ENCODE measurements at regions of chr17 and their contacts with region 1.

Region 1: DNA sequence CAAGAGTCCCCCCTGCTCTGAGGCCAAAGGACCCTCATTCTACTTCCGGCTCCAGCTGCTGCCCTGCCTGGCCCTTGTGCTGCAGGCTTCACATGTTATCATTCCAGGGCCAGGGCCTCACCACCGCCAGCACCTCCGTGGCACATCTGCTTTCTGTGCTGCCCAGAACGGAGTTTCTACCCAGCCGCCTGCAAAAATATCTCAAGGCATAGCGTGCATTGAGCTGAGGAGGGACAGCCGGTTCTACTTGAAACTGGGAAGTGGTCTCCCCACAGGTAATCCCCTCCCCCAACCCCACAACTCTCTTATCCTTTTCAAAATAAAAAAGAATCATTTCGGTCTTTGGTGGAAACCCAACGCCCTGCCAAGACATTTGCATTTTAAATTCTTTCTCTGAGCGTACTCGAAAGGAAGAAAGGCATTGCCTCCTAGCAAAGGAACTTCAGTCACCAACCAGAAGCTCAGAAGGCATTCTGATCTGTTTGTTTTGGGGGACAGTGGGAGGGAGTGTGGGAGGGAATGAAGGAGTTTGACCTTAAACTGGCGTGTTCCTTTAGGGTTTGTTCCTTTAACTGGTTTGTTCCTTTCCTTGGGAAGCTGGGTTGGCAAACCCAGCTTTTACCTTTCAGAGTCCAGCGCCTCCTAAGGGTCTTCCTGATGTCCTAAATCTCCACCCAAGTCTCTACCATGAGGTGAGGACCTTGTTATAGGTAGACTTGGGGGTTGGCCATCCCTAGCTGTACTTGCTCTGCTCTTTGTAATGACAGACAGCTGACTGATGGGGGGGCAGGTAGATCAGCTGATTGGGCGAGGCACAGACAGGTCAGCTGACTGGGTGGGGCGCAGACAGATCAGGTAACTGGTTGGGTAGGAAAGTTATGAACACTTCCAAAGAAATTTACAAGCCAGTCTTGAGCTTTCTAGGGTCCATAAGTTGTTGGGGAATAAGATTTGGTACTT is 33.4 kb upstream of the PIK3R6 start:
- DNase-seq: peak; percentile 84
- ATAC-seq: peak; percentile 60
- H3K4me3 ChIP-seq: peak overlapping the region; percentile 6; the same call in 1 of the 2 replicates
- H3K27ac ChIP-seq: peak overlapping the region; percentile 86
- H3K4me1 ChIP-seq: peaks cover 60% of the 10 kb centered on the region
- H3K27me3 ChIP-seq: no peaks in the 10 kb centered on the region
- CTCF ChIP-seq: peak; percentile 16 to 18 (median 17); a peak in 2 of 6 replicates
- EP300 ChIP-seq: peak; percentile 84 to 97
- POLR2A ChIP-seq: peak; percentile 51; the same call in 1 of the 2 replicates
- RAD21 ChIP-seq: peak; percentile 11

Region 2: DNA sequence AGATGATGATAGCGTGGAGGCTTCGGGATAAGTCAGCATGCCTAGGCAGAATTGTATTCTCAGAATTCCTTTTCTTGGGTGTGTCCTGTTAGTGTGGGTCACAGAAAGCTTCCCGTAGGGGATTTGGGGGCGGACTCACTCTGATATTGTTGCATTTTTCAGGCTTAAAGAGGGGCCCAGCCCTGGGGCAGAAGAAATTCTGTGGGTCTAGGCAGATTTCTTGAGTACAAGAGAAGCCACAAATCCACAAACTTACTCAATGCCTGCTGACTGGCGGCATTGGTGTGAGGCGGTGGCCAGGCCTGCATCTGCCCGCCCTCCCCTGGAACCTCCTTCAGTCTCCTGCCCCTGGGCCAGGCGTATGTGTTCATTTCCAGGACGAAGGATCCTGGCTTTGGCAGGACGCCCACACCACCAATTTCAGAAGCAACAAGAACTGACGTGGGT is 173.8 kb before region 1 on chr17:
- CTCF ChIA-PET with region 1: no interaction called
- POLR2A ChIA-PET with region 1: no interaction called
- RAD21 ChIA-PET with region 1: no interaction called
- SMC1A ChIA-PET with region 1: no interaction called
- in situ Hi-C with region 1: no loop called
- intact Hi-C with region 1: no loop called
- DNase-seq: no peak
- ATAC-seq: no peak
- H3K4me3 ChIP-seq: no peak overlapping the region
- H3K27ac ChIP-seq: no peak overlapping the region
- H3K4me1 ChIP-seq: no peaks in the 10 kb centered on the region
- H3K27me3 ChIP-seq: peaks cover 0 to 4% of the 10 kb centered on the region in 2 experiments; a peak in 3 of 4 replicates
- CTCF ChIP-seq: no peak
- EP300 ChIP-seq: no peak
- POLR2A ChIP-seq: no peak
- RAD21 ChIP-seq: no peak

Region 3: DNA sequence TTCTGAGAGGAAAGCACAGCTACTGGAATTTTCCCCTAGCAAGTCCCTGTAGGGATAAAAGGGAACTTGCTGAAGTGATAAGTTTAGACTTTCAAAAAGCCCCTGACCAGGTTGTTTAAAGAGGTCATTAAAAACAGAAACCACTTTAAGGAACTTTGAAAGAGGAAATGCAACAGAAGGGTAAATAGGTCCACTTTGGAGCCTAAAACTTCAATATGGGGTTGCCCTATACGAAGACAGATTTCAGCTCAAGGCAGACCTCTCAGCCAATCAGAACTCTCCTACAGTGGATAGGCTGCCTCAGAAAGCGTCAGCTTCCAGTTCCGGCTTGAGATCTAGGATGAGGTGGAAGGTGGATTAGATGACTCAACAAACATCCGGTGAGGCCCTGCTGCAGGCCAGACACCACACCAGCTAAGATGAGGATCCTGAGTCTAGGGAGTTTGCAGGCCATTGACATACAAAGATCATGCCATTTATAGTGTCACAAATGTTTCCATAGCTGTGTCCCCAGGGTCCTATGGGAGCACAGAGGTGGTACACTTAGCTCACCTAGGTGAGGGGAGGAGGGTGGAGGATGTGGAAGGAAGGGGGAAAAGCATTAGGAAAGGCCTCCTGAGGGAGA is 93.9 kb before region 1 on chr17:
- CTCF ChIA-PET with region 1: interaction called, 14 read pairs
- POLR2A ChIA-PET with region 1: interaction called, 11 read pairs
- RAD21 ChIA-PET with region 1: interaction called, 33 read pairs
- SMC1A ChIA-PET with region 1: interaction called, 25 read pairs
- in situ Hi-C with region 1: no loop called
- intact Hi-C with region 1: no loop called
- DNase-seq: peak; percentile 98
- ATAC-seq: peak; percentile 96
- H3K4me3 ChIP-seq: no peak overlapping the region; the same call in 1 of the 2 replicates
- H3K27ac ChIP-seq: peak overlapping the region; percentile 96
- H3K4me1 ChIP-seq: peaks cover 43% of the 10 kb centered on the region
- H3K27me3 ChIP-seq: no peaks in the 10 kb centered on the region
- CTCF ChIP-seq: no peak
- EP300 ChIP-seq: peak; percentile 56 to 62; a peak in 3 of 4 replicates
- POLR2A ChIP-seq: peak; percentile 71
- RAD21 ChIP-seq: no peak

Region 4: GRCh38 chr17:8867361-8867981 is 33.4 kb before region 1 on chr17 and contains the start of gene PIK3R6:
- CTCF ChIA-PET with region 1: interaction called, 100 read pairs
- POLR2A ChIA-PET with region 1: interaction called, 5 read pairs
- RAD21 ChIA-PET with region 1: interaction called, 115 read pairs
- SMC1A ChIA-PET with region 1: interaction called, 132 read pairs
- in situ Hi-C with region 1: no loop called
- intact Hi-C with region 1: no loop called
- DNase-seq: no peak
- ATAC-seq: peak; percentile 65
- H3K4me3 ChIP-seq: peak within 1 kb of the TSS; percentile 99
- H3K27ac ChIP-seq: peak within 1 kb of the TSS; percentile 88
- H3K4me1 ChIP-seq: peaks cover 25% of the 10 kb centered on the region
- H3K27me3 ChIP-seq: no peaks in the 10 kb centered on the region
- CTCF ChIP-seq: no peak
- EP300 ChIP-seq: no peak
- POLR2A ChIP-seq: peak; percentile 83
- RAD21 ChIP-seq: no peak
- polyA plus RNA-seq, gene PIK3R6: 6.7 to 7.4 TPM

Region 5: DNA sequence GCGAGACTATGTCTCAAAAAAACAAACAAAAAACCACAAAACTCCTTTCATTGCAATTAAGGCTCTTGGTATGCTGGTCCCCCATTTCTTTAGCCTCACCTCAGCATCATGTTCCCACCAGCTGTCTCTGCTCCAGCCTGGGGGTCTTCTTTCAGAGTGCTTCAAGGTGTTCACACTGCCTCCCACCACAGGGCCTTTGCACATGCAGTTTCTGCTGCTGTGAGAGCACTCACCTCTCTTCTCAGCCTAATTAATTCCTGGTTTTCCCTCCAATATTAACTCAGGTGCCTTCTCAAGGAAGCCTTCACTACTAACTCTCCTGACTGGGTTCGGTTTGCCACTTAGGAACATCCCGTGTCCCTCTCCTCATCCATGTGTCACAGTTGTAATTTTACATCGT is 17.6 kb before region 1 on chr17:
- CTCF ChIA-PET with region 1: no interaction called
- POLR2A ChIA-PET with region 1: no interaction called
- RAD21 ChIA-PET with region 1: no interaction called
- SMC1A ChIA-PET with region 1: no interaction called
- in situ Hi-C with region 1: no loop called
- intact Hi-C with region 1: no loop called
- DNase-seq: no peak
- ATAC-seq: no peak
- H3K4me3 ChIP-seq: no peak overlapping the region
- H3K27ac ChIP-seq: no peak overlapping the region
- H3K4me1 ChIP-seq: no peaks in the 10 kb centered on the region
- H3K27me3 ChIP-seq: no peaks in the 10 kb centered on the region
- CTCF ChIP-seq: no peak
- EP300 ChIP-seq: no peak
- POLR2A ChIP-seq: no peak
- RAD21 ChIP-seq: no peak

Region 6: DNA sequence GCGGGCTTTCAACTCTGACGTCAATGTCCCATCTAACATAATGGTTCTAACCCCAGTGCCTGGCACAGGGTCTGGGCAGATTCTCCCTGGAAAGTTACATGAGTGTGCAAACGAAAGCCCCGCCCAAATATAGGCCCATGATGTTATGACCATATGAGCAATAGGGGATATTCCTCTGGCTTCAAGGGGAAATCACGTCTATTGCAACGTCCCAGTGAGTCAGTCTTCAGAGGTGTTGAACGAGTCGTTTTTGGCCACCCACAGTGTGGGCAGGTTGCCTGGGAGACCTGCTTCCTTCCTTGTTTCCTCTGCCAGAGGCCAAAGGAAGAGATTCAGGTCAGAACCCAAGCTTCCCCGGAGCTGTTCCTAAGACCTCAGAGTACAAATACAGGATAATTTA is 34.3 kb after region 1 on chr17:
- CTCF ChIA-PET with region 1: interaction called, 13 read pairs
- POLR2A ChIA-PET with region 1: interaction called, 25 read pairs
- RAD21 ChIA-PET with region 1: interaction called, 11 read pairs
- SMC1A ChIA-PET with region 1: interaction called, 37 read pairs
- in situ Hi-C with region 1: no loop called
- intact Hi-C with region 1: loop called (anchors 1 kb)
- DNase-seq: no peak
- ATAC-seq: peak; percentile 69
- H3K4me3 ChIP-seq: no peak overlapping the region
- H3K27ac ChIP-seq: peak overlapping the region; percentile 59
- H3K4me1 ChIP-seq: peaks cover 29% of the 10 kb centered on the region
- H3K27me3 ChIP-seq: no peaks in the 10 kb centered on the region
- CTCF ChIP-seq: no peak
- EP300 ChIP-seq: no peak
- POLR2A ChIP-seq: no peak
- RAD21 ChIP-seq: no peak

Region 7: DNA sequence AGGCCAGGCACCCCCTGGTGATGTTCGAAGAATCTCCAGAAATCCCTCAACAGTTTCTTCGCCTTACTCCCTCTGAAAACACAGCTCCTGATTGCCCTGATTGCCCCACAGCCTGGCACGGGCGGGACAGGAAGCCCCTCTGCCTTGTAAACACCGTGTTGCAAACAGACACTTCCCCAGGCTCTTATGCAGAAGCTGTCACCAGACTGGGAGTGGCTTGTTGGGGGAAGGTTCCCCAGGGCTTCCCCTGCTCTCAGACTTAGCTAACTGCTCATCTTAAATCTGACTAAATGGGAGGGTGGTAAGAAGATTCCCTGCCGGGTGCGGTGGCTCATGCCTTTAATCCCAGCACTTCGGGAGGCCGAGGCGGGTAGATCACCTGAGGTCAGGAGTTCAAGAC is 53.4 kb after region 1 on chr17:
- CTCF ChIA-PET with region 1: interaction called, 13 read pairs
- POLR2A ChIA-PET with region 1: interaction called, 9 read pairs
- RAD21 ChIA-PET with region 1: interaction called, 38 read pairs
- SMC1A ChIA-PET with region 1: interaction called, 208 read pairs
- in situ Hi-C with region 1: no loop called
- intact Hi-C with region 1: loop called (anchors 2 kb)
- DNase-seq: no peak
- ATAC-seq: peak; percentile 72
- H3K4me3 ChIP-seq: no peak overlapping the region
- H3K27ac ChIP-seq: peak overlapping the region; percentile 81
- H3K4me1 ChIP-seq: peaks cover 85% of the 10 kb centered on the region
- H3K27me3 ChIP-seq: no peaks in the 10 kb centered on the region
- CTCF ChIP-seq: no peak
- EP300 ChIP-seq: peak; percentile 9 to 27; a peak in 1 of 4 replicates
- POLR2A ChIP-seq: peak; percentile 31; the same call in 1 of the 2 replicates
- RAD21 ChIP-seq: no peak

Measured in GM12878 (cell line).